HCT116 (cell line): ENCODE measurements at regions of chr12 and their contacts with region 1.

Region 1: DNA sequence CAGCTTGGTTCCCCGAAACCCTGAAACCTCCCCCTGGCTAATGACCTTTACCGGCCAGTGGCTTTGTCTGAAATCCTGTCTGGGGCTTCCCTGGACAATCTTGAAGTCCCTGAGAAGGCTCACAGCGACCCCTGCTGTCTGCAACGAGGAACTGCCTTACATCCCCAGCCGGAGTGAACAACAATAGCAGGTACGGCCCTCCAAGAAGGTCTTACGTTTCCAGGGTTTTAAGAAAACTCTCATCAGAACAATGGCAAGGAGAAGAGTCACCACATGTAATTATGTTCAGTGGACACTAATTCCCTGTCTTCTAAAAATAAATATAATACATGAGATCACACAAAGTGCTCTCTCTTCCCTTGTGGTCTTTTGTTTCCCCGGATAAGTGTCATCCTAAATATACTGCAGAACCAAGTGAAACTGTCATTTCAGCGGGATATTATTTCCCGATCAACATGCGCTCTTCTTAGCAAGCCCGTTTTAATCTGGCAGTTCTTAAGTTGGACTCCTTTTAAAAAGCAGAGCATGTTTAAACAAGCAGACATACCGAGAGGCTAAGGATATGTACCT is 53.3 kb downstream of the RBM19 start:
- DNase-seq: peak; percentile 52
- ATAC-seq: peak; percentile 94
- H3K4me3 ChIP-seq: no peak overlapping the region
- H3K27ac ChIP-seq: no peak overlapping the region
- H3K4me1 ChIP-seq: no peaks in the 10 kb centered on the region
- H3K27me3 ChIP-seq: no peaks in the 10 kb centered on the region
- CTCF ChIP-seq: peak; percentile 83 to 97 (median 96)
- POLR2A ChIP-seq: no peak
- RAD21 ChIP-seq: peak; percentile 92

Region 2: GRCh38 chr12:113310489-113310888 is 602.4 kb before region 1 on chr12:
- CTCF ChIA-PET with region 1: no interaction called
- POLR2A ChIA-PET with region 1: no interaction called
- RAD21 ChIA-PET with region 1: no interaction called
- intact Hi-C with region 1: loop called (anchors 2 kb)
- DNase-seq: no peak
- ATAC-seq: peak; percentile 63
- H3K4me3 ChIP-seq: no peak overlapping the region
- H3K27ac ChIP-seq: no peak overlapping the region
- H3K4me1 ChIP-seq: peaks cover 0 to 7% of the 10 kb centered on the region in 2 experiments; a peak in 2 of 4 replicates
- H3K27me3 ChIP-seq: no peaks in the 10 kb centered on the region
- CTCF ChIP-seq: peak in 2 of 3 experiments; percentile 6 to 18; a peak in 1 of 6 replicates
- POLR2A ChIP-seq: no peak
- RAD21 ChIP-seq: peak; percentile 16; the same call in 1 of the 2 replicates

Region 3: GRCh38 chr12:113439606-113440030 is 473.2 kb before region 1 on chr12:
- CTCF ChIA-PET with region 1: no interaction called
- POLR2A ChIA-PET with region 1: no interaction called
- RAD21 ChIA-PET with region 1: no interaction called
- intact Hi-C with region 1: loop called (anchors 1 kb)
- DNase-seq: no peak
- ATAC-seq: peak; percentile 91
- H3K4me3 ChIP-seq: no peak overlapping the region
- H3K27ac ChIP-seq: no peak overlapping the region
- H3K4me1 ChIP-seq: no peaks in the 10 kb centered on the region
- H3K27me3 ChIP-seq: no peaks in the 10 kb centered on the region
- CTCF ChIP-seq: peak; percentile 41 to 79 (median 77); a peak in 5 of 6 replicates
- POLR2A ChIP-seq: no peak
- RAD21 ChIP-seq: peak; percentile 81

Region 4: GRCh38 chr12:113462117-113462774 is 450.6 kb before region 1 on chr12:
- CTCF ChIA-PET with region 1: interaction called, 6 read pairs
- POLR2A ChIA-PET with region 1: no interaction called
- RAD21 ChIA-PET with region 1: no interaction called
- intact Hi-C with region 1: loop called (anchors 1 kb)
- DNase-seq: peak; percentile 67
- ATAC-seq: peak; percentile 85
- H3K4me3 ChIP-seq: no peak overlapping the region
- H3K27ac ChIP-seq: no peak overlapping the region
- H3K4me1 ChIP-seq: peaks cover 3 to 11% of the 10 kb centered on the region in 2 experiments; a peak in 3 of 4 replicates
- H3K27me3 ChIP-seq: peaks cover 12% of the 10 kb centered on the region; the same call in 1 of the 2 replicates
- CTCF ChIP-seq: peak; percentile 67 to 87 (median 75)
- POLR2A ChIP-seq: no peak
- RAD21 ChIP-seq: peak; percentile 72

Region 5: GRCh38 chr12:113647048-113647447 is 265.8 kb before region 1 on chr12:
- CTCF ChIA-PET with region 1: interaction called, 5 read pairs
- POLR2A ChIA-PET with region 1: no interaction called
- RAD21 ChIA-PET with region 1: no interaction called
- intact Hi-C with region 1: loop called (anchors 2 kb)
- DNase-seq: peak; percentile 8
- ATAC-seq: peak; percentile 50
- H3K4me3 ChIP-seq: no peak overlapping the region
- H3K27ac ChIP-seq: no peak overlapping the region
- H3K4me1 ChIP-seq: no peaks in the 10 kb centered on the region
- H3K27me3 ChIP-seq: peaks cover 39% of the 10 kb centered on the region
- CTCF ChIP-seq: peak; percentile 23 to 49 (median 29); a peak in 3 of 6 replicates
- POLR2A ChIP-seq: no peak
- RAD21 ChIP-seq: peak; percentile 48; the same call in 1 of the 2 replicates

Region 6: GRCh38 chr12:113786107-113786506 is 126.7 kb before region 1 on chr12:
- CTCF ChIA-PET with region 1: no interaction called
- POLR2A ChIA-PET with region 1: no interaction called
- RAD21 ChIA-PET with region 1: no interaction called
- intact Hi-C with region 1: loop called (anchors 1 kb)
- DNase-seq: no peak
- ATAC-seq: peak; percentile 70
- H3K4me3 ChIP-seq: no peak overlapping the region
- H3K27ac ChIP-seq: no peak overlapping the region
- H3K4me1 ChIP-seq: peaks cover 8 to 21% of the 10 kb centered on the region in 2 experiments
- H3K27me3 ChIP-seq: peaks cover 10% of the 10 kb centered on the region; the same call in 1 of the 2 replicates
- CTCF ChIP-seq: peak; percentile 32 to 44 (median 35); a peak in 5 of 6 replicates
- POLR2A ChIP-seq: no peak
- RAD21 ChIP-seq: peak; percentile 37

Region 7: GRCh38 chr12:113867258-113867657 is 45.6 kb before region 1 on chr12:
- CTCF ChIA-PET with region 1: no interaction called
- POLR2A ChIA-PET with region 1: no interaction called
- RAD21 ChIA-PET with region 1: no interaction called
- intact Hi-C with region 1: loop called (anchors 5 kb)
- DNase-seq: no peak
- ATAC-seq: peak; percentile 89
- H3K4me3 ChIP-seq: no peak overlapping the region
- H3K27ac ChIP-seq: no peak overlapping the region
- H3K4me1 ChIP-seq: 0 out of 4 replicates have a peak, but pooled peaks cover 0 to 3% of the 10 kb centered on the region in 2 experiments
- H3K27me3 ChIP-seq: no peaks in the 10 kb centered on the region
- CTCF ChIP-seq: peak; percentile 13 to 62 (median 61); a peak in 4 of 6 replicates
- POLR2A ChIP-seq: no peak
- RAD21 ChIP-seq: peak; percentile 17